T-cell (primary cell): ENCODE measurements at regions of chr1 and their contacts with region 1.

Region 1: DNA sequence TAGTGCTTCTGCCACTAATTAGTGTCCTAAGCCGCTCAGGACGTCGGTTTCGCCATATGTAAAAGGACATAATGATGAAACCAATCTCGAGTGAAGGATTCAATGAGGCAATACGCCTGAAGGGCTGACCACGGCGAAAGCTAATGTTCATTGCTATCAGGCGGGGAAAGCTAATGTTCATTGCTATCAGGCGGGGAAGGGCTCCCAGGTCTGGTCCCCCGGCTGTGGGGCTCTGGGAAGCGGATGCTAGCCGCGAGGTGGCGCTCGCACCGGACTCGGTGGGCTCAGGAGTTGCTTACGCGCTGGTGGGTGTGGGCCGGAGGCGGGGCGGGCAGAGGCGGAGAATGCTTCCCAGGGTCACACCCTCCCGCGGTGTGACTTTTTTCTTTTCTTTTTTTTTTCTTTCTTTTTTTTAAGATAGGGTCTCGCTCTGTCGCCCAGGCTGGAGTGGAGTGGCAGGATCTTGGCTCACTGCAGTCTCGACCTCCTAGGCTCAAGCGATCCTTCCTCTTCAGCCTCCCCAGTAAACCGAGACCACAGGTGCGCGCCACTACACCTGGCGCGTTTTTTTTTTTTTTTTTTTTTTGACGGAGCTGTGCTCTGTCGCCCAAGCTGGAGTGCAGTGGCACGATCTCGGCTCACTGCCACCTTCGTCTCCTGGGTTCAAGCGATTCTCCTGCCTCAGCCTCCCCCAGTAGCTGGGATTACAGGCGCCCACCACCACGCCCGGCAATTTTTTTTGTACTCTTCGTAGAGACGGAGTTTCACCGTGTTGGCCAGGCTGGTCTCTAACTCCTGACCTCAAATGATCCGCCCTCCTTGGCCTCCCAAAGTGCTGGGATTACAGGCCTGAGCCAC is 1.1 kb upstream of the PEAR1 start:
- DNase-seq: peak; percentile 59 to 89 (median 78)
- ATAC-seq: peak; percentile 92 to 98 (median 94)
- H3K4me3 ChIP-seq: peak overlapping the region; percentile 24 to 69
- H3K4me3 Mint-ChIP-seq: peak overlapping the region; percentile 61 to 75 (median 62)
- H3K27ac ChIP-seq: no peak overlapping the region
- H3K27ac Mint-ChIP-seq: no peak overlapping the region
- H3K4me1 ChIP-seq: peaks cover 4 to 29% of the 10 kb centered on the region in 2 experiments
- H3K4me1 Mint-ChIP-seq: peaks cover 15 to 22% (median 22%) of the 10 kb centered on the region in 3 donors
- H3K27me3 ChIP-seq: peaks cover 0 to 80% of the 10 kb centered on the region in 2 experiments
- H3K27me3 Mint-ChIP-seq: peaks cover 23 to 61% of the 10 kb centered on the region in 2 donors

Region 2: DNA sequence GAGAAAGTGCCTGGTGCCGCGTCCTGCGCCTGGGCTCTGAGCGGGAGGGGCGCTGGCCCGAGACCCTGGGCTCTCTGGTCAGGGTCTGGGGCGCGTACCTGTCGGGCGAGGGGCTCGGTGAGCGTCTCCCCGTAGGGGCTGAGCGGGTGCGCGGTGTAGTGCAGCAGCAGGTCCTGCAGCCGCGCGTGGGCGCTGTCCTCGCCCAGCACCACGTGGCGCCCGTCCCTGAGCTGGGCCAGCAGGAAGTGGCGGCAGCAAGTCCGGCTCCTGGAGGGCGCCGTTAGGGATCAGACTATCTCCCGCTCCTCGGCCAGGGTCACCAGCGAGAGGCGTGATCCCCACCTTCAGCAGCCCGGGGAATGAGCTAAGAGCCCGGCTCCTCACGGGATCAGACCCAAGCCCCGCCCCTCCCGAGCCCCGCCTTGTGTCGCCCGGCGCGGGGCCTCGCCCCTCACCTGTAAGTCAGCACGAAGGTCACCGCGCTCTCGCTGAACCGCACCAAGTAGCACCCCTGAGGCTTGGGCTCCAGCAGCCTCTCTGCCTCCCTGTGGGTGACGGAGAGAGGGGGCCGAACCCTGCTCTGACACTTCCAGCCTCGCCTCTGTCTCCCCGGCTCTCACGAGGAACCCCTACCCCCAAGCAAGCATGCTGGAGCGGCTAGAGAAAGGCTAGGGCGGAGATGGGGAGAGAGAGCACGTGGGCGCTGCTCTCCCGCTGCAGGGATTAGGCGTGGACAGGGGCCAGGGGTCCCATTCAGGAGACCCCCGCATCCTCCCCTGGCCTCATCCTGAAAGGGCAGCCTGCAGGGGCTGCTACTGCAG is 78.5 kb before region 1 on chr1:
- CTCF ChIA-PET with region 1: interaction called in 1 of 2 experiments, 11 read pairs
- POLR2A ChIA-PET with region 1: no interaction called
- DNase-seq: peak; percentile 41 to 85 (median 71)
- ATAC-seq: peak; percentile 46 to 53 (median 50)
- H3K4me3 ChIP-seq: peak overlapping the region; percentile 54 to 70
- H3K4me3 Mint-ChIP-seq: peak overlapping the region; percentile 88 to 92 (median 89)
- H3K27ac ChIP-seq: peak overlapping the region; percentile 99
- H3K27ac Mint-ChIP-seq: peak overlapping the region; percentile 98 to 100
- H3K4me1 ChIP-seq: peaks cover 25 to 79% of the 10 kb centered on the region in 2 experiments
- H3K4me1 Mint-ChIP-seq: peaks cover 57 to 77% (median 68%) of the 10 kb centered on the region in 3 donors
- H3K27me3 ChIP-seq: no peaks in the 10 kb centered on the region
- H3K27me3 Mint-ChIP-seq: no peaks in the 10 kb centered on the region

Region 3: DNA sequence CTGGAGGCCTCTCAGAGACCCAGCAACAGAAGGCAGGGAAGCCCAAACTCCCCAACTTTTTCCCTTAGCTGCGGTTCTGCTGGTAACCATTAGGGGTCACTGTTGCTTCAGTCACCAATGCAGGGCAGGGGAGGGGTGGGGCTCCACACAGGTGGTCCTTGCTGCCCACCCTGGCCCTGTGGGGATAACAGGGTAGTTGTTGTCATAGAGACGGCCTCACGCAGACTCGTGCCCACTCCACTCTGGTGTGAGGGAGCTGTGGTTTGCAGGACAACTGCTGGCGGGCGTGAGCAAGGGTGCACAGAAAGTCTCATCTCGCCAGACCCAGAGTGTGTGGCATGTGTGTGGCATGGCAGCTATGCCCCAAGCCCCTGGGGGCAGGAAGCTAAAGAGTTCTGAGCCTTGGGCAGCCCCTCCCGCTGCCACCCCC is 53.4 kb before region 1 on chr1:
- CTCF ChIA-PET with region 1: interaction called, 8 to 14 read pairs
- POLR2A ChIA-PET with region 1: no interaction called
- DNase-seq: peak in 23 of 35 experiments; percentile 18 to 73 (median 40)
- ATAC-seq: peak; percentile 62 to 67 (median 64)
- H3K4me3 ChIP-seq: no peak overlapping the region
- H3K4me3 Mint-ChIP-seq: no peak overlapping the region
- H3K27ac ChIP-seq: no peak overlapping the region
- H3K27ac Mint-ChIP-seq: no peak overlapping the region
- H3K4me1 ChIP-seq: peaks cover 0 to 16% of the 10 kb centered on the region in 2 experiments
- H3K4me1 Mint-ChIP-seq: peaks cover 14 to 20% (median 17%) of the 10 kb centered on the region in 3 donors
- H3K27me3 ChIP-seq: peaks cover 0 to 75% of the 10 kb centered on the region in 2 experiments
- H3K27me3 Mint-ChIP-seq: peaks cover 41 to 50% of the 10 kb centered on the region in 2 donors